ENCODE measurements at regions of chr1 and their contacts with region 1.

Region 1: GRCh38 chr1:152869808-152870419 is 8.2 kb upstream of the SMCP start:
- DNase-seq: peak; percentile 23
- H3K4me3 Mint-ChIP-seq: no peak overlapping the region
- H3K27ac Mint-ChIP-seq: no peak overlapping the region
- H3K4me1 Mint-ChIP-seq: no peaks in the 10 kb centered on the region
- H3K27me3 Mint-ChIP-seq: peaks cover 2% of the 10 kb centered on the region

Region 2: DNA sequence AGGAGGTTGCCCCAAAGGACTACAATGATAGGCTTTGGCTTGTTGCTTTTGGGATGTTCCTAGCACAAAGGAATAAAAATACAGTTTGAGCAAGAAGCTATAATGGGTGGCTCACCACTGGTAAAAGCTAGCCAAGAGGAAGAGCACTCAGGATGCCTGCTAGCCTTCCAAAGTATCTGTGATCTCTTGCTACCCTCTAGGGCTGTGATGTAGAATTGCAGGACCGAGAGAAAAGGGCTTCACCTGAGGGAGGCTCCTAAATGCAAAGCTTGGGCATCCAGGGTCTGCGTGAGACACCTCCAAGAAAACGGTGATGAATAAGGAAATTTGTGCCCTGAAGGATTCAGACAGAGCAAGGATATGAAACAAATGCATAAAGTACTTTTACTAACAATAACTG is 56.2 kb after region 1 on chr1:
- intact Hi-C with region 1: loop called (anchors 2 kb)
- DNase-seq: no peak
- H3K4me3 Mint-ChIP-seq: no peak overlapping the region
- H3K27ac Mint-ChIP-seq: no peak overlapping the region
- H3K4me1 Mint-ChIP-seq: no peaks in the 10 kb centered on the region
- H3K27me3 Mint-ChIP-seq: peaks cover 1% of the 10 kb centered on the region

Region 3: GRCh38 chr1:153001382-153001781 is 131.5 kb after region 1 on chr1 and contains the start of gene SPRR3:
- intact Hi-C with region 1: no loop called
- DNase-seq: no peak
- H3K4me3 Mint-ChIP-seq: no peak within 1 kb of the TSS
- H3K27ac Mint-ChIP-seq: no peak within 1 kb of the TSS
- H3K4me1 Mint-ChIP-seq: no peaks in the 10 kb centered on the region
- H3K27me3 Mint-ChIP-seq: peaks cover 2% of the 10 kb centered on the region
- total RNA-seq, gene SPRR3: not detected in 2 replicates

Region 4: DNA sequence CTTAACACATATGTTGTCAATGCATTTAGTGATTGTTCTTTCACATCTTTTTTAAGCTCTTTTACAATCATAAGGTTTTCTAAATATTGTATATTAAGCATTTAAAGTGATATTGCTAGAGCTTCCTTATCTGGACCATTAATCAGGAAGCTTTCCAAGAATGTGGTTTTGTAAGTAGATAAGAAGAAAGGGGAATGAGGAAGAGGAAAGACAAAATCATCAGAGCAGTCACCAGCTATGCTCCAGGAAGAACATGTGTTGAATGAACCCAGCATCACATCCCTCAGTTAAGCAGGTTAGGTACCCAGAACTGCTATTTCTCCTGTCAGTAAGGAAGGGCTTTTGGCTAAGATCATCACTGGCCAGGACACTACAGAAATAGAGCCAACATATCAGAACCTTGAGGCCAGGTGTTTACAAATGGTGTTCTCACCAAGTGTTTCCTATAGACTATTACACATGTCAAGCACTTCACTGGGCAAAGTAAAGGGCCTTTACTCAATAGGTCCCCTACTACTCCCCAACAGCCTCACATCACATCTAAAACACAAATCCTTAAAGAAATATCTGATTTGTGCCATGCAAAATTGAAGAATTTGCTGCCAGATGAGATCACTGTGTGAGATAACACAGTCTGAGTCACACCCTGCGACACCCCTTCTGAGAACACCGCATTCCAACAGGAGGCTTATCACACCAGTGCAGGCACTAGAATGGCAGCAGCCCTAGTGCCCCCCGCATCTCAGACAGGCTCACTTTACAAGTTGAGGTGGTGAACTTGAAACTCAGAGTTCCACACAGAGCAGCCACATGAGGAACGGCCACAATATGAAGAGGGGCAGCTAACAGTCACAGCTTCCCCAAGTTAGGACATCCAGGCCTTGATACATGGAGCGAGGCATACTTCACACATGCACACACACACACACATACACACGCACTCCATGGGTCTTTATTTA is 189.2 kb after region 1 on chr1:
- intact Hi-C with region 1: no loop called
- DNase-seq: no peak
- H3K4me3 Mint-ChIP-seq: no peak overlapping the region
- H3K27ac Mint-ChIP-seq: no peak overlapping the region
- H3K4me1 Mint-ChIP-seq: no peaks in the 10 kb centered on the region
- H3K27me3 Mint-ChIP-seq: peaks cover 13% of the 10 kb centered on the region

Region 5: DNA sequence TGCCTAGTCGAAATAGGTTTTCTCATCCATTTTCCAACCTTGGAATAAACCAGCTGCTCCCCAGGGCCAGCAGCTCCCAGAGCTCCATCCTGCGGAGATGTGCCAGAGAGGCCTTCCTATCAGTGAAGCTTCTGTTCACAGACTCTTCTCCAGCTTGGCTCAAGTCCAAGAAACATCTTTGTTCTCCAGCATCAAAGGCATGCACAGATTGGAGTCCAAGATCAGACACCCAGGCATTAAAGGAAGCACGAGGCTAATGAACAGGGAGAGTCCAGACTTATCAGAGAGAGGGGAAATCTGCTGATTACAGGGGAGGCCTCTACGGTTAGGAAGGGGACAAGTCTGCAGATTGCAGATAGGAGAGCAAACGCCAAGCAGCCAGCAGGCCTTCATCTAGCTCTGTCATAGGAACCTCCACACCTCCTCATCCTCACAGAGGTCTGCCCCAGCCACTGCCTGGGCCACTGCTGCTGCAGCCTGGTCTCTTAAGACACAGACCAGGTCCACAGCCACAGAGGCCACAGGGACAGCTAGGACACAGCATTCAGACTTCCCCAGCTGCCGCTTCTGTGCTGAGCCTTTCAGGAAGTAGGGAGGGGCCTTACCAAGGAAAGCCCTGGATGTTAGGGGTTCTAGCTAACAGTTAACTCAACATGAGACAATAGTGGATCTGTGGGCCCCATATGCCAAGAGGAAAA is 350.8 kb after region 1 on chr1:
- intact Hi-C with region 1: loop called (anchors 1 kb)
- DNase-seq: no peak
- H3K4me3 Mint-ChIP-seq: no peak overlapping the region
- H3K27ac Mint-ChIP-seq: no peak overlapping the region
- H3K4me1 Mint-ChIP-seq: peaks cover 14% of the 10 kb centered on the region
- H3K27me3 Mint-ChIP-seq: peaks cover 9% of the 10 kb centered on the region

Region 6: DNA sequence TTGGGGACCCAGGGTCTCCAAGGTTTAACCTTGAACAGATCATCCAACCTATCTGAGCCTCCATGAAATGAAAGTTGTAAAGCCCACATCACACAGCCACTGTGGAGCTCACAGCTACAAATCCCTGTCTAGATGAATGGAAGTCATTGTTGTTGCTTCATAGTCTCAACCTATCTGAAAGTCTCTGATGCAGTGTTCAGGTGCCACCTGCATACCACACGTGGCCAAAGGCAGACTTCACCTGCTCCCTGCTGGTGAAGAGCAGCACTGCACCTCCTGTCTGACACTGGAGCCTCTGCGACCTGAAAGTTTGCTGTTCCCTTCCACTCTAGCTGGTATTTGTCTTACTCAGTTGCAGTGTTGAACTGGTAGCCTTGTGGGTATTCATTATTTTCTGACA is 407.9 kb after region 1 on chr1:
- intact Hi-C with region 1: loop called (anchors 5 kb)
- DNase-seq: no peak
- H3K4me3 Mint-ChIP-seq: no peak overlapping the region
- H3K27ac Mint-ChIP-seq: no peak overlapping the region
- H3K4me1 Mint-ChIP-seq: no peaks in the 10 kb centered on the region
- H3K27me3 Mint-ChIP-seq: peaks cover 27% of the 10 kb centered on the region

Measured in activated T-helper 1 cell treated with anti-CD3 and anti-CD28 coated beads, Interleukin-12 subunit alpha, Interleukin-12 subunit beta, Interleukin-2, Interleukin-4 antibody, amounts not matched to agents 30 ng/mL and 10 ng/mL and 1 ng/mL, durations not matched to agents 14 hours and 24 hours and 36 hours (primary cell).